Activated CD4-positive, alpha-beta T cell treated with anti-CD3 and anti-CD28 coated beads for 36 hours (primary cell): ENCODE measurements at regions of chr2 and their contacts with region 1.

Region 1: GRCh38 chr2:148524519-148524919 is 120.0 kb upstream of the EPC2 start:
- DNase-seq: peak; percentile 80
- ATAC-seq: peak; percentile 87
- H3K4me3 Mint-ChIP-seq: peak overlapping the region; percentile 1
- H3K27ac Mint-ChIP-seq: peak overlapping the region; percentile 84
- H3K4me1 Mint-ChIP-seq: peaks cover 86% of the 10 kb centered on the region
- H3K27me3 Mint-ChIP-seq: no peaks in the 10 kb centered on the region

Region 2: GRCh38 chr2:147843864-147844696 is 680.4 kb before region 1 on chr2:
- CTCF ChIA-PET with region 1: no interaction called
- POLR2A ChIA-PET with region 1: no interaction called
- intact Hi-C with region 1: loop called (anchors 5 to 10 kb)
- DNase-seq: peak; percentile 93
- ATAC-seq: peak; percentile 82
- H3K4me3 Mint-ChIP-seq: peak overlapping the region; percentile 82
- H3K27ac Mint-ChIP-seq: peak overlapping the region; percentile 77
- H3K4me1 Mint-ChIP-seq: peaks cover 34% of the 10 kb centered on the region
- H3K27me3 Mint-ChIP-seq: peaks cover 14% of the 10 kb centered on the region

Region 3: GRCh38 chr2:148509288-148509902 is 15.1 kb before region 1 on chr2:
- CTCF ChIA-PET with region 1: interaction called, 47 read pairs
- POLR2A ChIA-PET with region 1: interaction called, 4 read pairs
- intact Hi-C with region 1: loop called (anchors 1 kb)
- DNase-seq: peak; percentile 93
- ATAC-seq: peak; percentile 100
- H3K4me3 Mint-ChIP-seq: peak overlapping the region; percentile 62
- H3K27ac Mint-ChIP-seq: peak overlapping the region; percentile 71
- H3K4me1 Mint-ChIP-seq: peaks cover 17% of the 10 kb centered on the region
- H3K27me3 Mint-ChIP-seq: no peaks in the 10 kb centered on the region

Region 4: DNA sequence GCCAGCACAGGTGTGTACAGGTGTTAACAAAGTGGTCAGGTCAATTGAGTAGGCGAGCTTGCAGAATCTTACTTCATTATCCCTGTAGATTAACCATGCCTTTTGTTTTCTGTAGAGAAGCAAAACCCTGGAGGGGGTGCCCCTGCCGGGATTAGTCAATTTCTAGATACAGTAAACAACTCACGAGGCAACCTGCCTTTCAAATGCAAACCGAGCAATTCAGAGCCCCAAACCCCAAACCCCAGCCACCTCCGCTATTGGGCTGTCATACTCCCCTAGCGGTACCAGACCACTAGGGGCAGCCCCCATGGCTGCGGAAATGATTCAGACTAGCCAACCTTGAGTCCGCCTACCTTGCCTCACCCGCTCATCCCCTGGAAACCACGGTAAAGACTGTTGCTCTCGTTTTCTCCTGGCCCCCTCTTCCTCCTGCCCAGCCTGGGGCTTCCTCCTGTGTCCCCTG is 289.1 kb after region 1 on chr2:
- CTCF ChIA-PET with region 1: no interaction called
- POLR2A ChIA-PET with region 1: no interaction called
- intact Hi-C with region 1: loop called in 1 of 2 experiments (anchors 10 kb)
- DNase-seq: peak; percentile 88
- ATAC-seq: peak; percentile 98
- H3K4me3 Mint-ChIP-seq: no peak overlapping the region
- H3K27ac Mint-ChIP-seq: no peak overlapping the region
- H3K4me1 Mint-ChIP-seq: peaks cover 22% of the 10 kb centered on the region
- H3K27me3 Mint-ChIP-seq: peaks cover 11% of the 10 kb centered on the region

Region 5: GRCh38 chr2:148917431-148917830 is 392.9 kb after region 1 on chr2:
- CTCF ChIA-PET with region 1: no interaction called
- POLR2A ChIA-PET with region 1: no interaction called
- intact Hi-C with region 1: loop called in 1 of 2 experiments (anchors 5 kb)
- DNase-seq: peak; percentile 50
- ATAC-seq: peak; percentile 97
- H3K4me3 Mint-ChIP-seq: no peak overlapping the region
- H3K27ac Mint-ChIP-seq: no peak overlapping the region
- H3K4me1 Mint-ChIP-seq: peaks cover 9% of the 10 kb centered on the region
- H3K27me3 Mint-ChIP-seq: no peaks in the 10 kb centered on the region

Region 6: GRCh38 chr2:149375801-149376361 is 851.4 kb after region 1 on chr2:
- CTCF ChIA-PET with region 1: no interaction called
- POLR2A ChIA-PET with region 1: no interaction called
- intact Hi-C with region 1: no loop called
- DNase-seq: no peak
- ATAC-seq: no peak
- H3K4me3 Mint-ChIP-seq: no peak overlapping the region
- H3K27ac Mint-ChIP-seq: no peak overlapping the region
- H3K4me1 Mint-ChIP-seq: no peaks in the 10 kb centered on the region
- H3K27me3 Mint-ChIP-seq: peaks cover 2% of the 10 kb centered on the region